ENCODE measurements at regions of chr16 and their contacts with region 1.

Region 1: DNA sequence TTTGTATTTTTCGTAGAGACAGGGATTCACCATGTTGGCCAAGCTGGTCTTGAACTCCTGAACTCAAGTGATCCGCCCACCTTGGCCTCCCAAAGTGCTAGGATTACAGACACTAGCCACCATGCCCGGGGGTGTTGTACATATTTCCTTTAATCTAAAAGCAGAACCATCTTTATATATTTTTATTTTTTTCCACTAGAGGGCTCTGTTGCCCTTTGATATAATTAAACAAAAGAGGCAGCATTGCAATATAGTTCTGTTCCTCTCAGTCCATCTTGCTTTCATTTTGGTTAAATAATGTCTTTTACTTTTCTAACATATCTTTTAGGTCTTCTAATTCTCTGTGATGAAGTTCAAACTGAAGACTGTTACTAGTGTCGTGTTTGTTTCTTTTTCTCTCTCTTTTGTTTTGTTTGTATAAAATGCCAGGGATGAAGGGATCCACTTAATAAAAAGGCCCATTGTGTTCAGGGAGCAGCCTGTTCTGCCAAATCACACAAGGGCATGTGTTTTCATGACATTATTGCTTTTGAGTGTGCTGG is 23.4 kb downstream of the WWOX start:
- DNase-seq: peak; percentile 56
- H3K4me3 ChIP-seq: no peak overlapping the region
- H3K27ac ChIP-seq: peak overlapping the region; percentile 58 to 74
- H3K4me1 ChIP-seq: peaks cover 6% of the 10 kb centered on the region
- H3K27me3 ChIP-seq: no peaks in the 10 kb centered on the region
- CTCF ChIP-seq: peak; percentile 35 to 60 (median 45)
- POLR2A ChIP-seq: no peak

Region 2: GRCh38 chr16:78235168-78235800 is 112.4 kb after region 1 on chr16:
- intact Hi-C with region 1: loop called (anchors 10 kb)
- DNase-seq: peak; percentile 76
- H3K4me3 ChIP-seq: no peak overlapping the region
- H3K27ac ChIP-seq: no peak overlapping the region
- H3K4me1 ChIP-seq: no peaks in the 10 kb centered on the region
- H3K27me3 ChIP-seq: no peaks in the 10 kb centered on the region
- CTCF ChIP-seq: peak; percentile 59 to 91 (median 81)
- POLR2A ChIP-seq: no peak

Region 3: GRCh38 chr16:78342336-78342735 is 219.5 kb after region 1 on chr16:
- intact Hi-C with region 1: no loop called
- DNase-seq: no peak
- H3K4me3 ChIP-seq: no peak overlapping the region
- H3K27ac ChIP-seq: no peak overlapping the region
- H3K4me1 ChIP-seq: no peaks in the 10 kb centered on the region
- H3K27me3 ChIP-seq: no peaks in the 10 kb centered on the region
- CTCF ChIP-seq: no peak
- POLR2A ChIP-seq: no peak

Measured in testis (tissue), 5 donors.